ENCODE measurements at regions of chr9 and their contacts with region 1.

Region 1: GRCh38 chr9:15135164-15135792 is 171.7 kb downstream of the TTC39B start:
- DNase-seq: peak; percentile 47
- H3K4me3 ChIP-seq: peak overlapping the region; percentile 43; the same call in 1 of the 2 replicates
- H3K27ac ChIP-seq: no peak overlapping the region
- H3K27me3 ChIP-seq: no peaks in the 10 kb centered on the region
- CTCF ChIP-seq: peak; percentile 90

Region 2: GRCh38 chr9:15058236-15058635 is 77.0 kb before region 1 on chr9:
- CTCF ChIA-PET with region 1: interaction called, 10 read pairs
- POLR2A ChIA-PET with region 1: no interaction called
- DNase-seq: no peak
- H3K4me3 ChIP-seq: no peak overlapping the region
- H3K27ac ChIP-seq: no peak overlapping the region
- H3K27me3 ChIP-seq: no peaks in the 10 kb centered on the region
- CTCF ChIP-seq: no peak

Region 3: GRCh38 chr9:15104826-15105420 is 30.4 kb before region 1 on chr9:
- CTCF ChIA-PET with region 1: interaction called, 113 read pairs
- POLR2A ChIA-PET with region 1: no interaction called
- DNase-seq: peak; percentile 4
- H3K4me3 ChIP-seq: no peak overlapping the region
- H3K27ac ChIP-seq: no peak overlapping the region
- H3K27me3 ChIP-seq: no peaks in the 10 kb centered on the region
- CTCF ChIP-seq: peak; percentile 88

Region 4: GRCh38 chr9:15149450-15149849 is 14.2 kb after region 1 on chr9:
- CTCF ChIA-PET with region 1: interaction called, 10 read pairs
- POLR2A ChIA-PET with region 1: no interaction called
- DNase-seq: no peak
- H3K4me3 ChIP-seq: no peak overlapping the region
- H3K27ac ChIP-seq: no peak overlapping the region
- H3K27me3 ChIP-seq: peaks cover 29% of the 10 kb centered on the region
- CTCF ChIP-seq: no peak

Region 5: DNA sequence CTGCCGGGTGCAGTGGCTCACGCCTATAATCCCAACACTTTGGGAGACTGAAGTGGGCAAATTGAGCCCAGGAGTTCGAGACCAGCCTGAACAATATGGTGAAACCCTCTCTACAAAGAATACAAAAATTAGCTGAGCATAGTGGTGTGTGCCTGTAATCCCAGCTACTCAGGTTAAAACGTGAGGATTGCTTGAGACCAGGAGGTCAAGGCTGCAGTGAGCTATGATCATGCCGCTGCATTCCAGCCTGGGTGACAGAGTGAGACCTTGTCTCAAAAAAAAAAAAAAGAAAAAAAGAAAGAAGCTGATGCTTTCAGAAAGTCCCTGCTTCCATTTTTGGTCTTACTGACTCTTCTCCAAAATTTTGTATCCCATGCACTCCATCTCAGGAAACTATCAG is 318.7 kb after region 1 on chr9:
- CTCF ChIA-PET with region 1: no interaction called
- POLR2A ChIA-PET with region 1: no interaction called
- DNase-seq: no peak
- H3K4me3 ChIP-seq: no peak overlapping the region
- H3K27ac ChIP-seq: no peak overlapping the region
- H3K27me3 ChIP-seq: no peaks in the 10 kb centered on the region
- CTCF ChIP-seq: no peak

Measured in AG04450 (cell line).